ENCODE measurements at regions of chr5 and their contacts with region 1.

Region 1: DNA sequence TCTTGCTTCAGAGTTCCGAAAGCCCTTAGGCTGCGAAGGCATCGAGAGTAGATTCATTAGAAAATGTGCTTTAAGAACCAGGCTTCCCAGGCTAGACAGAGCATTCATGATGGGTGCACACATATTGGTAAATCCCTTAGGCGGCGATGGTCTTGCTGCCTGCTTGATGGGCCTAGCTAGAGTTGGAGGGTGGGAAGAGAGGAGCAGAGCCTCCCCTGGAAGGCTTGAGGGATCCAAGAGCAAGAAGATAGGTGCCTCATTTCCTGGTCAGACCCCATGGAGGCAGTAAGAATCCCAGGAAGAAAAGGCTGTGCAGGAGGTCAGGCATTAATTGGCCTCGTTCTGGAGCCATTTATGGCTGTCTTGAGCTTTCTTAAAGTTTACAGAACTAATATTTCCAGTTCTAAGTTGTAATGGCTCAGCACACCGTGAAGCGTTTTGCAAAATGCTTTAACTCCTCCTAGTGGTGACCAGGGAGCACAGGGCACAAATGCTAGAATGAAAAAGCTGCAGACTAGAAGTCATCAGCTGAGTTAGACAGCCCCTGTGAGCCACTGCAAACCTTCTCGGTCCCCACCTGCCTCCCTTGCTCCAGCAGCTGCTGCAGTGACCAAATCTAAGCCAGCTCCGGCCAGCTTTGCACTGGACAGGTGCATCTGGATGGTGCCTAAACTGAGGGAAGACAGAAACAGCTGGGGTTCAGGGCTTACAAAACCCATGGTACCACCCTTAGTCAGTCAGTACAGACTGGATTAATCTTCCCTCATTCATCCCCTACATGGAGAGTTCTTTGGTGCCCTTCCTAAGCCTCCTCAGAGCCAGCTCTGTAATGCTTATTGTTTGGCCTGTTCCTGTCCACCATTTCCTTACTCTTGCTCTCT is 14.7 kb downstream of the SLC45A2 start:
- DNase-seq: peak; percentile 27
- ATAC-seq: peak; percentile 93
- H3K4me3 ChIP-seq: no peak overlapping the region
- H3K27ac ChIP-seq: no peak overlapping the region
- H3K4me1 ChIP-seq: peaks cover 17% of the 10 kb centered on the region
- H3K27me3 ChIP-seq: no peaks in the 10 kb centered on the region
- CTCF ChIP-seq: peak; percentile 80 to 90 (median 88)
- EP300 ChIP-seq: no peak
- POLR2A ChIP-seq: no peak
- RAD21 ChIP-seq: peak; percentile 94

Region 2: DNA sequence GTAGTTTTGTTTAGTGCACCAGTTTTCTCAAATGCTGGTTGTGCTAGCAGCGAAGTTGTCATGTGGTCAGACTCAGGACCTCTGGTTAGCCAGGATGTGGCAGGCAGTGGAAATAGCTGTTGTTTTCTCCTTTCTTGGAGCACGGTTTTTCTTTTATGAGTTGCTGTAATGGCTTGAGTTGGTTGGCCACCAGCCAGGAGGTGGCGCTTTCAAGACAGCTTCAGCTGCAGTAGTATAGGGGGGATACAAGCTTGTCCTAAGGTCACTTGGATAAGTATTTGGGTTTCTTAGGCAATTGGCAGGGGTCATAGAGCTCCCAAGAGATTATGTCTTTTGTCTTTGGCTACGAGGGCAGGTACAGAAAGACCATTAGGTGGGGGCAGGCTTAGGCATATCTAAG is 803.3 kb before region 1 on chr5:
- CTCF ChIA-PET with region 1: no interaction called
- POLR2A ChIA-PET with region 1: no interaction called
- RAD21 ChIA-PET with region 1: no interaction called
- SMC1A ChIA-PET with region 1: no interaction called
- in situ Hi-C with region 1: no loop called
- intact Hi-C with region 1: loop called (anchors 10 kb)
- DNase-seq: no peak
- ATAC-seq: no peak
- H3K4me3 ChIP-seq: no peak overlapping the region
- H3K27ac ChIP-seq: no peak overlapping the region
- H3K4me1 ChIP-seq: no peaks in the 10 kb centered on the region
- H3K27me3 ChIP-seq: no peaks in the 10 kb centered on the region
- CTCF ChIP-seq: no peak; a peak in 1 of 6 replicates
- EP300 ChIP-seq: no peak
- POLR2A ChIP-seq: no peak
- RAD21 ChIP-seq: peak; percentile 29; the same call in 1 of the 2 replicates

Region 3: DNA sequence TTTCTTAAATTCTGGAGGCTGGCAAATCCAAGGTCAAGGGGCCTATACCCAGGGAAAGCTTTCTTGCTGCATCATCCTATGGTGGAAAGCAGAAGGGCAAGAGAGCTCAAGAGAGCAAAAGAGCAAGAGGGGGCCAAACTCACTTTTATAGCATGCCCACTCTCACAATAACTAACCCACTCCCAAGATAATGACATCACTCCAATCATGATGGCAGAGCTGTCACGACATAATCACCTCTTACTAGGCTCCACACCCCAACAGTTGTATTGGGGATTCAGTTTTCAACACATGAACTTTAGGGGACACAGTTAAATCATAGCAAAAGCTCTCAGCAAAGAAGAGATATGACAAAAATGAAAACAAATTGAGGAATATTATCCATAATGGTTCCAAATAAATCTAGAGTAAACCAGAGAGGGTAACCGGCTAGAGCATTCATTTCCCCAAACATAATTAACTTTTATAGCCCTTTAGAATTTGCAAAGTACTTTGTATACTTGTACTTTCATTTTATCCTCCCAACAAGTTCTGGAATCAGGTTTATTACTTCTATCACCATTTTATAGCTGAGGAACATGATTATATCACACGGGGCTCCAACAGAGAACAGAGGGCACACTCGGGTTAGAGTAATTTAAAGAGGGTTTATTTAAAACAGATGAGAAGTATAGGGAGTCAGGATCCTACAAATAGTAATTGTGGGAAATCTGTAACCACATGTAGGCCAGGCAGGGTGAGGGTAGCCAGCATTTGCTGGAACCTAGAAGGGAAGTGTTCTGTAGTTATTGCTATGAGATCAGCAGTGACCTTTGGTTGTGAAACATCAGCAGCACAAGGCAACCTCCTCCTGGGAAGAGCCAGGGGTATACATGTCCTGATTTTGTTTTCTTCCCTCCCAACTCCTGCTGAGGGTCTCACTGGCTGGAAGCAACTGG is 536.2 kb before region 1 on chr5:
- CTCF ChIA-PET with region 1: interaction called, 70 read pairs
- POLR2A ChIA-PET with region 1: no interaction called
- RAD21 ChIA-PET with region 1: interaction called, 34 read pairs
- SMC1A ChIA-PET with region 1: interaction called, 43 read pairs
- in situ Hi-C with region 1: no loop called
- intact Hi-C with region 1: loop called (anchors 1 kb)
- DNase-seq: no peak
- ATAC-seq: no peak
- H3K4me3 ChIP-seq: no peak overlapping the region
- H3K27ac ChIP-seq: no peak overlapping the region
- H3K4me1 ChIP-seq: no peaks in the 10 kb centered on the region
- H3K27me3 ChIP-seq: no peaks in the 10 kb centered on the region
- CTCF ChIP-seq: no peak
- EP300 ChIP-seq: no peak
- POLR2A ChIP-seq: no peak
- RAD21 ChIP-seq: no peak

Region 4: GRCh38 chr5:33470544-33470943 is 499.3 kb before region 1 on chr5:
- CTCF ChIA-PET with region 1: interaction called, 23 read pairs
- POLR2A ChIA-PET with region 1: no interaction called
- RAD21 ChIA-PET with region 1: interaction called, 21 read pairs
- SMC1A ChIA-PET with region 1: interaction called, 12 read pairs
- in situ Hi-C with region 1: no loop called
- intact Hi-C with region 1: no loop called
- DNase-seq: no peak
- ATAC-seq: peak; percentile 74
- H3K4me3 ChIP-seq: no peak overlapping the region
- H3K27ac ChIP-seq: no peak overlapping the region
- H3K4me1 ChIP-seq: no peaks in the 10 kb centered on the region
- H3K27me3 ChIP-seq: no peaks in the 10 kb centered on the region
- CTCF ChIP-seq: peak in 1 of 3 experiments; percentile 39; a peak in 1 of 6 replicates
- EP300 ChIP-seq: no peak
- POLR2A ChIP-seq: no peak
- RAD21 ChIP-seq: peak; percentile 70

Region 5: GRCh38 chr5:33958176-33958575 is 11.6 kb before region 1 on chr5:
- CTCF ChIA-PET with region 1: interaction called, 63 read pairs
- POLR2A ChIA-PET with region 1: no interaction called
- RAD21 ChIA-PET with region 1: interaction called, 4 read pairs
- SMC1A ChIA-PET with region 1: interaction called, 7 read pairs
- in situ Hi-C with region 1: no loop called
- intact Hi-C with region 1: no loop called
- DNase-seq: no peak
- ATAC-seq: no peak
- H3K4me3 ChIP-seq: no peak overlapping the region
- H3K27ac ChIP-seq: no peak overlapping the region
- H3K4me1 ChIP-seq: no peaks in the 10 kb centered on the region
- H3K27me3 ChIP-seq: no peaks in the 10 kb centered on the region
- CTCF ChIP-seq: no peak
- EP300 ChIP-seq: no peak
- POLR2A ChIP-seq: no peak
- RAD21 ChIP-seq: no peak

Region 6: DNA sequence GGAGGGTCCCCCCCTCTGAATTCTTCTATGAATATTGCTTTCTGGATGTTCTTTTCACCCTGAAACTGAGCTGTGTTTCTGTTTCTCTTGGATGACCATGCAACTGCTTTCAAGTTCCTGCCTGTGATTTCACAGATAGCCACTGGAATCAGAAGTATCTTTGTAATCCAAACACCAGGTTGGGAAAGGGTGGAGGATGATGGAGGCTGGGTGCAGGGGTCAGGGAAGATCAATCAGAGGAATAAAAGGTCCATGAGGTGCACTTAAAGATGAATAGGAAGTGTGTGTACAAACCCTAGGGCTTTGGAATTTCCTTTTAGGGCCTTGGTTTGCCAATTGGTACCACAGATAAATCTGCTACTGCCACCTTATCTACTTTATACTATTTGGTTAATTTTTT is 1146.1 kb after region 1 on chr5:
- CTCF ChIA-PET with region 1: no interaction called
- POLR2A ChIA-PET with region 1: no interaction called
- RAD21 ChIA-PET with region 1: no interaction called
- SMC1A ChIA-PET with region 1: no interaction called
- in situ Hi-C with region 1: no loop called
- intact Hi-C with region 1: no loop called
- DNase-seq: no peak
- ATAC-seq: no peak
- H3K4me3 ChIP-seq: no peak overlapping the region
- H3K27ac ChIP-seq: no peak overlapping the region
- H3K4me1 ChIP-seq: no peaks in the 10 kb centered on the region
- H3K27me3 ChIP-seq: no peaks in the 10 kb centered on the region
- CTCF ChIP-seq: no peak
- EP300 ChIP-seq: no peak
- POLR2A ChIP-seq: no peak
- RAD21 ChIP-seq: no peak